Activated CD4-positive, alpha-beta T cell treated with anti-CD3 and anti-CD28 coated beads, Interleukin-2, amount 10 ng/mL, durations not matched to agents 24 days and 14 days (primary cell): ENCODE measurements at regions of chr10 and their contacts with region 1.

Region 1: GRCh38 chr10:121845044-121845784 is 82.6 kb downstream of the ATE1 start:
- DNase-seq: no peak
- H3K4me3 Mint-ChIP-seq: no peak overlapping the region
- H3K27ac Mint-ChIP-seq: no peak overlapping the region
- H3K4me1 Mint-ChIP-seq: peaks cover 3% of the 10 kb centered on the region
- H3K27me3 Mint-ChIP-seq: no peaks in the 10 kb centered on the region

Region 2: DNA sequence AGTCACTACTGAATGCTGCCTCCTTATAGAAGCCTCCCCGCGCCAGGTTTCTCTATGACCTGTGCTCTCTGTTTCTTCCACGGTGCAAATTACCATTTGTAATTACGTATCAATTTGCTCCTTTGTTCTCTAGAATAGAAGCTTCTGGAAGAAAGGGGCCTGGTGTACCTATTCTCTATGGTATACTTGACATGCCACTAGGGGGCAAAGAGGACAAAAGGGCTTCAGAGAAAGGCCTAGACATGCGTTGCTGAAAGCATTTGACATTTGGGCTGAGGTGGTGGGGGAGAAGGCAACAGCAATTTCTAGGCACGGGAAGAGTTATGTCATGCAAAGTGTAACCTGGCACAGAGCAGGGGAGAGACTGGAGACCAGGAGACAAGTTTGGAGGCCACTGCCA is 845.3 kb before region 1 on chr10:
- intact Hi-C with region 1: no loop called
- DNase-seq: peak; percentile 31
- H3K4me3 Mint-ChIP-seq: no peak overlapping the region
- H3K27ac Mint-ChIP-seq: no peak overlapping the region
- H3K4me1 Mint-ChIP-seq: no peaks in the 10 kb centered on the region
- H3K27me3 Mint-ChIP-seq: no peaks in the 10 kb centered on the region

Region 3: GRCh38 chr10:121753726-121754476 is 91.3 kb before region 1 on chr10:
- intact Hi-C with region 1: loop called (anchors 10 kb)
- DNase-seq: no peak
- H3K4me3 Mint-ChIP-seq: no peak overlapping the region
- H3K27ac Mint-ChIP-seq: no peak overlapping the region
- H3K4me1 Mint-ChIP-seq: peaks cover 11% of the 10 kb centered on the region
- H3K27me3 Mint-ChIP-seq: peaks cover 3% of the 10 kb centered on the region